Activated naive CD4-positive, alpha-beta T cell treated with anti-CD3 and anti-CD28 coated beads for 36 hours (primary cell): ENCODE measurements at regions of chr3 and their contacts with region 1.

Region 1: GRCh38 chr3:43309372-43310305 is 23.3 kb downstream of the SNRK start:
- DNase-seq: no peak
- H3K4me3 Mint-ChIP-seq: no peak overlapping the region
- H3K27ac Mint-ChIP-seq: peak overlapping the region; percentile 7
- H3K4me1 Mint-ChIP-seq: peaks cover 68% of the 10 kb centered on the region
- H3K27me3 Mint-ChIP-seq: no peaks in the 10 kb centered on the region

Region 2: DNA sequence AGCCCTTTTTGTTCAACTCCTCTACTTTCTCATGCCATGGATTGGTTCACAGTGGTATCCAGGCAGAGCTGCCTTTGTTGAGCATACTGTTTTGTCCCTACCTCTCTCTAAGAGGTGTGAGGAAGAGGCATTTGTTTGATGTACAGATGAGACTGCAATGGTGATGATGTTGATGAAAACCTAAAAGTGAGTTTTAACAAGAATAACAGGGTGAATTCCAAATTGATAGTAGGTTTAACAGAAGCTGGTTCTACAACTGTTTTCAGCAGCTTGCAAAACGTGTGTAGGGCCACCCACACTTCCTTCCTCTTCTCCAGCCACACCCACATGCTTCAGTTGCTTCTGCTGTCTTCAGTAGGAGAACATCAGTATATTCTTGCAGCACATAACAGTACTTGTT is 13.1 kb before region 1 on chr3:
- CTCF ChIA-PET with region 1: interaction called, 12 read pairs
- intact Hi-C with region 1: loop called (anchors 1 kb)
- DNase-seq: peak; percentile 74
- H3K4me3 Mint-ChIP-seq: peak overlapping the region; percentile 72
- H3K27ac Mint-ChIP-seq: peak overlapping the region; percentile 93
- H3K4me1 Mint-ChIP-seq: peaks cover 75% of the 10 kb centered on the region
- H3K27me3 Mint-ChIP-seq: no peaks in the 10 kb centered on the region

Region 3: DNA sequence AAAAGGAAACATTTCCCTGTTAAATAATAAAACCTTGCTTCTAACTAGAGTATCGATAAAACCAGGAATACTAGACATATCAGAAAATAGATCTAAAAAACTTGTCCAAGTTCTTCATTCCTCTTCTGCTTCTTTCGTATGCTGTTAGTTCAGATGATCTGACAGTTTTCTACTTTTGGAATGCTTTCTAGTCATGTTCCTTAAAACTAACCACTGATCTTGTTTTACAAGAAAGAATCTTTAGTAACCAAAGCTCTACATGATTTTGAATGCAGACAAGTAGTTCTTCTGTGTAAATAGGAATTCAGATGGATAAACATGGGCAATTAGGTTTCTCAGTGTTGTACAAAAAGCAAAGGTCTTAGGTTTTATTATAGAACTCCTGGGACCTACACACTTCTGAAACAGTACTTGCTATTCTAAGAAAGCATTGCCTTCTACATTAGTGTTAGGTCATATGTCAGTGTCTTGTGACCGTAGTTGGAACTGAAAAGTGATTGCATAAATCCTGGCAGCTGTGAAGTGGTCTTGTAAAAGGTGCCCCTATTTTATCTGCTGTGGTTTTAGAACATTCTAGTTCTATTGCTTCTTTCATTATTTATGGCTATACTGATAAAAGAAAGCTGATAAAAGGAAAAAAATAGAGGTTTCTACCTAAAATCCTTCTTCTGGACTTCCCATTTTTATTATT is 17.4 kb after region 1 on chr3:
- CTCF ChIA-PET with region 1: no interaction called
- intact Hi-C with region 1: loop called (anchors 2 kb)
- DNase-seq: no peak
- H3K4me3 Mint-ChIP-seq: no peak overlapping the region
- H3K27ac Mint-ChIP-seq: peak overlapping the region; percentile 38
- H3K4me1 Mint-ChIP-seq: peaks cover 69% of the 10 kb centered on the region
- H3K27me3 Mint-ChIP-seq: no peaks in the 10 kb centered on the region